Esophagus squamous epithelium (tissue), 5 donors: ENCODE measurements at regions of chr14 and their contacts with region 1.

Region 1: DNA sequence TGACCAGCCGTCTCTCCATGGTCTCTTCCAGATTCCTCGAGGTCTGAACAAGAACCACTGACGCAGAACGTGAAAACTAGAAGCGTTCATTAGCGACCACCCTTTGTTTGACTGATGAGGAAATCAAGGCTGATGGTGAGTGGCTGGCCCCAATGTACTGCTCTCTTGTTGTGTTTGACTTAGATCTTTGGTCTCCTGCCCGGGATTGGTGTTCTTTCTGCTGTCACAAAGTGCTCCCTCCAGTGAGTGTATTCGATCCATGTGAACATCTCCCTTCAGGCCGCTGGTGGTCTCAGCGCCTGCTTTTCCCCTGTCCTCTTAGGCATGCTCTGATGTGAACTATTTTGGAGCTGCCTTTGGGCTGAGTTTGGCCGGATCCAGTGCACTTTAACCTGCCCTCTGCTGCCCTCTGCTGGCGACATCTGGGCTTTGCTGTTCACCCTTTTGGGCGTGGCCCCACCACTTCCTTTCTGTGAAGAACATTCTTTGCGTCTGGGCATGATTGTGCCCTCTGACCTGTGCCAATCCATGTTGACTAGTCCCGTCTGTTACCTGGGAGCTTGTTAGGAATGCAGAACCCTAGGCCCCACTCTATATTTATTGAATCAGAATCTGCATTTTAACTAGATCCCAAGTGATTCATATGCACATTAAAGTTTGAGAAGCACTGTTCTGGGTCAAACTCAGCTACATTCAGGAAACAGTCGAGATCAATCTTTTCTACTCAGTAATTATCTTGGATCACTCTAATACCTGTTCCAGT is 279.2 kb downstream of the TTC6 start:
- DNase-seq: no peak
- H3K4me3 ChIP-seq: no peak overlapping the region
- H3K27ac ChIP-seq: no peak overlapping the region
- H3K4me1 ChIP-seq: peaks cover 0 to 22% (median 0%) of the 10 kb centered on the region in 3 donors
- H3K27me3 ChIP-seq: no peaks in the 10 kb centered on the region
- CTCF ChIP-seq: peak; percentile 58 to 91 (median 83)
- POLR2A ChIP-seq: no peak

Region 2: GRCh38 chr14:37246427-37246914 is 628.1 kb before region 1 on chr14:
- intact Hi-C with region 1: loop called (anchors 10 kb)
- DNase-seq: no peak
- H3K4me3 ChIP-seq: no peak overlapping the region
- H3K27ac ChIP-seq: no peak overlapping the region
- H3K4me1 ChIP-seq: peaks cover 0 to 20% (median 0%) of the 10 kb centered on the region in 3 donors
- H3K27me3 ChIP-seq: no peaks in the 10 kb centered on the region
- CTCF ChIP-seq: peak in 5 of 6 experiments; percentile 62 to 84 (median 72)
- POLR2A ChIP-seq: no peak

Region 3: DNA sequence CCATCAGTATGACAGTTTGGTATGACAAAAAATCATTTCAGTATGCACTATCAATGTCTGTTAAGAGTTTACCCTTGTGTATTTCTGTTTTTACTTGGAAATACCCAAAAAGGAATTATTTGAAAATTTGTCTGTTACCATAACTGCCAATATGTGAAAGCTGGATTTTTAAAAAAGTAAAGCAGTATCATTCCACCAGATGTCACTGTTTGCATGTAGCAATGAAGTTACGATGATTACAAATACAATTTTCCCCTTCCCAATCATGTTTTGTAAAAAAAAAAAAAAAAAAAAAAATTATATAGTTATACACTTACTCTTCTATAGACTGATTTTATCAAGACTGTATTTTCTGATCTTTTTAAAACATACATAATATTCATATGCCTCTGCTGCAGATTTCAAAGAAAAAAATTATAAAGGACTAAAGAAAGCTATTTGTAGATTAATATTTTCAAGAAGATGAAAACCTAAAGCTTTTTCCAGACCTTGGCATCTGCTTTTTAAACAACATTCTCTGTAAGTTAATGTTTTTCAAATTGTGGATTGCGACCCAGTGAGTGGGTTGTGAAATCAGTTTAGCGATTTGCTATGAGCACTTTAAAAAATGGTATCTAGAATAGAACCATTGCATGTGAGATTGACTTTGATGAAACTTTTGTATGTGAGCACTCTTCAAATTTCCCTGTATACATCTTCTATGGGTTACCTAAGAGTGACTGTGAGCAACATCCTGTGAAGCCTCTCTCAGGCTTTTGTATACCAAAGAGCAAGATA is 165.0 kb before region 1 on chr14:
- intact Hi-C with region 1: loop called (anchors 10 kb)
- DNase-seq: no peak
- H3K4me3 ChIP-seq: no peak overlapping the region
- H3K27ac ChIP-seq: no peak overlapping the region
- H3K4me1 ChIP-seq: no peaks in the 10 kb centered on the region
- H3K27me3 ChIP-seq: no peaks in the 10 kb centered on the region
- CTCF ChIP-seq: peak in 4 of 6 experiments; percentile 18 to 48 (median 36)
- POLR2A ChIP-seq: no peak